ENCODE measurements at regions of chr5 and their contacts with region 1.

Region 1: GRCh38 chr5:103929338-103930003 is 366.9 kb upstream of the NUDT12 start:
- DNase-seq: no peak
- ATAC-seq: no peak
- H3K4me3 ChIP-seq: no peak overlapping the region
- H3K27ac ChIP-seq: no peak overlapping the region
- H3K4me1 ChIP-seq: no peaks in the 10 kb centered on the region
- H3K27me3 ChIP-seq: no peaks in the 10 kb centered on the region
- CTCF ChIP-seq: no peak

Region 2: GRCh38 chr5:104071887-104072286 is 142.4 kb after region 1 on chr5:
- intact Hi-C with region 1: loop called in 1 of 3 experiments (anchors 10 kb)
- DNase-seq: no peak
- ATAC-seq: no peak
- H3K4me3 ChIP-seq: no peak overlapping the region
- H3K27ac ChIP-seq: no peak overlapping the region
- H3K4me1 ChIP-seq: no peaks in the 10 kb centered on the region
- H3K27me3 ChIP-seq: no peaks in the 10 kb centered on the region
- CTCF ChIP-seq: no peak

Region 3: DNA sequence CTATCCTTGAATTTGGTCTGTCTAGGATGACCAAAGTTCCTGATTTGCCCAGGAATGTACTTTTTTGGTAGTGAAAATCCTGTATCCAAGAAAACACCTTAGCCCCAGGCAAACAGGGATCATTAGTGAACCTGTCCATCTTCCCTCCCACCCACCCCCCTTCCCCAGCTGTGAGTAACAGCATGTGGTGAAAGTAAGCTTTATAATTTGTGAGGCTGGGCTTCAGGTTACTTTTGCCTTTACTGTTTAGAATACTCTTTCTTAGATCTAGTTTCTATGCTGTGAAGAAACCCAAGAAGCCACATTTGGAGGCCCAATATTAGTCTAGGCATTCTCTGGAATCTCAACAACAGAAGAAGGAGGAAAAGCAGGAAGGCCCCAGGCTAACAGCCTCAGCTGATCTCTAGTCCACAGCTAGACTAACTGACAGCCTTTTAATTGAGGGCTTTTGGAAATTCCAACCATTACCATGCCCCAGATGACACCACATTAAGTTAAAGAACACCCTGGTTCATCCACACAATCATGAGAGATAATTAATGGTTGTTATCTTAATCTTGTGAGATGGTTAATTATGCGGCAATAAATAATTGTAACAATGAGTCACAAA is 336.2 kb after region 1 on chr5:
- intact Hi-C with region 1: no loop called
- DNase-seq: no peak
- ATAC-seq: no peak
- H3K4me3 ChIP-seq: no peak overlapping the region
- H3K27ac ChIP-seq: no peak overlapping the region
- H3K4me1 ChIP-seq: no peaks in the 10 kb centered on the region
- H3K27me3 ChIP-seq: no peaks in the 10 kb centered on the region
- CTCF ChIP-seq: no peak

Measured in pancreas (tissue), 10 donors.